Heart right ventricle (tissue), 16 donors: ENCODE measurements at regions of chr12 and their contacts with region 1.

Region 1: GRCh38 chr12:63940310-63941005 is 96.0 kb downstream of the SRGAP1 start:
- DNase-seq: peak in 1 of 2 donors; percentile 26
- ATAC-seq: peak in 7 of 8 donors; percentile 26 to 83 (median 68)
- H3K4me3 ChIP-seq: no peak overlapping the region
- H3K27ac ChIP-seq: peak overlapping the region in 8 of 10 donors; percentile 14 to 75 (median 25)
- H3K4me1 ChIP-seq: peaks cover 2 to 68% (median 38%) of the 10 kb centered on the region in 9 donors
- H3K27me3 ChIP-seq: no peaks in the 10 kb centered on the region
- CTCF ChIP-seq: no peak

Region 2: GRCh38 chr12:63457857-63458256 is 482.6 kb before region 1 on chr12:
- intact Hi-C with region 1: no loop called
- DNase-seq: no peak
- ATAC-seq: no peak
- H3K4me3 ChIP-seq: no peak overlapping the region
- H3K27ac ChIP-seq: no peak overlapping the region
- H3K4me1 ChIP-seq: no peaks in the 10 kb centered on the region
- H3K27me3 ChIP-seq: no peaks in the 10 kb centered on the region
- CTCF ChIP-seq: no peak

Region 3: GRCh38 chr12:63958876-63959580 is 18.6 kb after region 1 on chr12:
- intact Hi-C with region 1: loop called in 1 of 10 experiments (anchors 1 kb)
- DNase-seq: no peak
- ATAC-seq: no peak
- H3K4me3 ChIP-seq: no peak overlapping the region
- H3K27ac ChIP-seq: no peak overlapping the region
- H3K4me1 ChIP-seq: peaks cover 0 to 27% (median 16%) of the 10 kb centered on the region in 9 donors
- H3K27me3 ChIP-seq: no peaks in the 10 kb centered on the region
- CTCF ChIP-seq: no peak

Region 4: GRCh38 chr12:63967358-63968145 is 27.1 kb after region 1 on chr12:
- intact Hi-C with region 1: loop called in 1 of 10 experiments (anchors 1 kb)
- DNase-seq: no peak
- ATAC-seq: no peak
- H3K4me3 ChIP-seq: no peak overlapping the region
- H3K27ac ChIP-seq: no peak overlapping the region
- H3K4me1 ChIP-seq: peaks cover 0 to 43% (median 3%) of the 10 kb centered on the region in 9 donors
- H3K27me3 ChIP-seq: no peaks in the 10 kb centered on the region
- CTCF ChIP-seq: no peak

Region 5: GRCh38 chr12:63978519-63978918 is 38.1 kb after region 1 on chr12:
- intact Hi-C with region 1: no loop called
- DNase-seq: no peak
- ATAC-seq: no peak
- H3K4me3 ChIP-seq: no peak overlapping the region
- H3K27ac ChIP-seq: no peak overlapping the region
- H3K4me1 ChIP-seq: peaks cover 0 to 16% (median 0%) of the 10 kb centered on the region in 9 donors
- H3K27me3 ChIP-seq: no peaks in the 10 kb centered on the region
- CTCF ChIP-seq: no peak